HCT116 (cell line): ENCODE measurements at regions of chr2 and their contacts with region 1.

Region 1: DNA sequence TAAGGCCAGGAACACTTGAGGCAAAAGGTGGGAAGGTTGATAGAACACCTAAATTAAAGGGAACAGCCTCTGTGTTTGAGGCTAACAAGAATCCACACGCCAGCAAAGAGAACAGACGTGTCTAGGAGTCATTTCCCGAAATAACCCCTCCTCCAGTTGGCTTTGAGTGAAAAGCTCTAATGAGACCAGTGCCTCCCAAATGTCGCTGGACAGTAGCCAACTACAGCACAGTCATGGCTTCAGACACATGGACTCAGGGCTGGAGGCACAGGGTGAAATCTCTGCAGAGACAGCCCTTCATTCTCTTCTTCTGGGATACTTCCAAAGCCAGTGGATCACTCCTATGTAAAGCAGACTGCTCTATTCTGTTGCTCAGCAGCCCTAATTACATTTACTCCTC is 49.6 kb downstream of the SOWAHC start:
- DNase-seq: no peak
- ATAC-seq: no peak
- H3K4me3 ChIP-seq: no peak overlapping the region
- H3K27ac ChIP-seq: no peak overlapping the region
- H3K4me1 ChIP-seq: no peaks in the 10 kb centered on the region
- H3K27me3 ChIP-seq: peaks cover 5% of the 10 kb centered on the region; the same call in 1 of the 2 replicates
- CTCF ChIP-seq: no peak
- POLR2A ChIP-seq: no peak
- RAD21 ChIP-seq: no peak

Region 2: DNA sequence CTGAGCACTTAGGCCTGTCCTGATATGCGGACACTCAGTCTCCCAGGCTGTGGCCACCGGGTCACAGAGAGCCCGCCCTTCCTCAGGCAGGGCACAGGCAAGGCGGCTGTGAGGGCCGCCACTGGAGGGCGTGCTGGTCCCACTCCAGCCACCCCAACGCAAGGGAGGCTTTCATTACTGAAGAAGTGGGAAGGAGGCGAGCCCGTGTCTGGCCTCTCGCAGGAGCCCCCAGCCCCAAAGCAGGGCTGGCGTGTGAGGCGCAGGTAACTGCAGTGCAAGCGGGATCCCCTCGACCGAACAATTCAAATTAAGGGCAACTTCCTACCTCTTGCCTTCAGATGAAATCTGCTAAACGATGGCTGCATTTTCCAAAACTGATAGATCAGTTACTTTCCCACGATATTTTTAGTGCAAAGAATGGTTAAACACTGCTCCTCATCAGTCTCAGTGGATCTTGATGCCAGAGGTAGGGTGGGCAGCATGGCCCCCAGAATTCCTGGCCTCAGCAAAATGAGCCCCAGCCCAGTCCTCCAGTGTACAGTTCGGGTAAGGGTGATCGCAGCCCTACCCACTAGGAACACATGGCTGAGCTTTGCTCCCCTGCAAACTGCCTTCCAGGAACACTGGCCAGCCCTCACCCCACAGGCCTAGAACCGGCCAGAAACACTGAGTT is 147.1 kb before region 1 on chr2:
- CTCF ChIA-PET with region 1: no interaction called
- POLR2A ChIA-PET with region 1: no interaction called
- RAD21 ChIA-PET with region 1: no interaction called
- intact Hi-C with region 1: loop called (anchors 5 kb)
- DNase-seq: peak; percentile 33
- ATAC-seq: peak; percentile 100
- H3K4me3 ChIP-seq: no peak overlapping the region
- H3K27ac ChIP-seq: no peak overlapping the region
- H3K4me1 ChIP-seq: peaks cover 0 to 5% of the 10 kb centered on the region in 2 experiments; a peak in 1 of 4 replicates
- H3K27me3 ChIP-seq: no peaks in the 10 kb centered on the region
- CTCF ChIP-seq: peak; percentile 91 to 94 (median 93)
- POLR2A ChIP-seq: no peak
- RAD21 ChIP-seq: peak; percentile 98

Region 3: GRCh38 chr2:109676346-109676902 is 12.7 kb after region 1 on chr2:
- CTCF ChIA-PET with region 1: no interaction called
- POLR2A ChIA-PET with region 1: no interaction called
- RAD21 ChIA-PET with region 1: no interaction called
- intact Hi-C with region 1: no loop called
- DNase-seq: no peak
- ATAC-seq: no peak
- H3K4me3 ChIP-seq: no peak overlapping the region
- H3K27ac ChIP-seq: no peak overlapping the region
- H3K4me1 ChIP-seq: no peaks in the 10 kb centered on the region
- H3K27me3 ChIP-seq: no peaks in the 10 kb centered on the region
- CTCF ChIP-seq: no peak
- POLR2A ChIP-seq: no peak
- RAD21 ChIP-seq: no peak